Cardiac septum (tissue), 1 donor: ENCODE measurements at regions of chr20 and their contacts with region 1.

Region 1: DNA sequence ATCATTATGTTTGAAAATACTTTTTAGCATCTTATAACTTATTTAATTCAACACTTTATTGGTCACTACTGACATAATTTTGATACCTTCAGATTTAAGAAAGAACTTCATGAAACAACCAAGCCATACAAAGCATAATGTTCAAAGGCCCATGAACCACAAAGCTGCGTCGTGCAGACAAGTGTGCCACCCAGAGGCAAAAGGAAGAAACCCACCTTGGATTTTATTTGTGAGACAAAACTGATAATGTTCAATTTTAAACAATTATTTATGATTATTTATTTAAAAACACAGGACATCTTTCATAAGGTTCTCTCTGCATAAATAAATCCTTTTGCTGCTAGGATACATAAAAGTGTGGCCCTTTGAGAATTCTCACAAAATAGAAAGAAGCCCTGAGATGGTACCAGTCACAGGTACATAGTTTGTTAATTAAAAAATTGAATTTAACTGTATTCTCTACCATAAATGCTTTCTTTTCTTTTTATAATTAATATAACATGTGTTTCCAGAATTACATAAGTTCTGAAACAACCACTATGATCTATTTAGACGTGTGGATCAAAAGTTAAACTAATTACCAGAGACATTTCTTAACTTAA is 143.7 kb downstream of the RALGAPA2 start:
- DNase-seq: no peak

Region 2: DNA sequence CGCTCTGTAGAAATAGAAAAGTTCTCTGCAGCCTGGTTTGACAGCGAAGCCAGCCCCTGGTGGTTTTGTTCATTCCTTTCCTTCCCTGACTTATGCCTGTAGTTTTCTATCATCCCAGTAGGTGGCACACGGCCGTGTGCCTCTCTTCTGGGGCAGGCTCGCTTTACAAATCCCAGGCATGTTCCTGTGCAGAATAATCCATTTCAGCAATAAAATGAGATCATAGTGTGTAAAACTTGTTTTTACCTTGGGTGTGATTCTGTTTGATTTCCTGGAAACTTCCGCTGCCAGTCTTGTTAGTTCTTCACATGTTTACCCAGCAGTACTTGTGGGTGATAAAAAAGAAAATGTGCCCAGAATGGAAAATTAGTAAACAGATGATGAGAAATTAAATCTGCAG is 208.2 kb before region 1 on chr20:
- intact Hi-C with region 1: loop called (anchors 2 kb)
- DNase-seq: no peak